Activated CD4-positive, alpha-beta T cell treated with anti-CD3 and anti-CD28 coated beads, Interleukin-2, amount 10 ng/mL, durations not matched to agents 7 days and 5 days (primary cell): ENCODE measurements at regions of chr17 and their contacts with region 1.

Region 1: GRCh38 chr17:50841949-50842354 is 6.6 kb downstream of the WFIKKN2 start:
- DNase-seq: peak; percentile 61
- H3K4me3 Mint-ChIP-seq: no peak overlapping the region
- H3K27ac Mint-ChIP-seq: no peak overlapping the region
- H3K4me1 Mint-ChIP-seq: peaks cover 2% of the 10 kb centered on the region
- H3K27me3 Mint-ChIP-seq: no peaks in the 10 kb centered on the region

Region 2: GRCh38 chr17:50783193-50783660 is 58.7 kb before region 1 on chr17:
- CTCF ChIA-PET with region 1: interaction called, 15 read pairs
- POLR2A ChIA-PET with region 1: no interaction called
- DNase-seq: peak; percentile 80
- H3K4me3 Mint-ChIP-seq: no peak overlapping the region
- H3K27ac Mint-ChIP-seq: no peak overlapping the region
- H3K4me1 Mint-ChIP-seq: peaks cover 35% of the 10 kb centered on the region
- H3K27me3 Mint-ChIP-seq: peaks cover 36% of the 10 kb centered on the region

Region 3: GRCh38 chr17:50882871-50883270 is 40.9 kb after region 1 on chr17:
- CTCF ChIA-PET with region 1: no interaction called
- POLR2A ChIA-PET with region 1: no interaction called
- DNase-seq: no peak
- H3K4me3 Mint-ChIP-seq: no peak overlapping the region
- H3K27ac Mint-ChIP-seq: no peak overlapping the region
- H3K4me1 Mint-ChIP-seq: peaks cover 39% of the 10 kb centered on the region
- H3K27me3 Mint-ChIP-seq: peaks cover 4% of the 10 kb centered on the region